Ascending aorta (tissue), 2 donors: ENCODE measurements at regions of chr10 and their contacts with region 1.

Region 1: GRCh38 chr10:22316285-22317120 is at the start of gene COMMD3:
- DNase-seq: peak in 1 of 2 donors; percentile 93
- H3K4me3 ChIP-seq: peak within 1 kb of the TSS; percentile 91 to 94
- H3K27ac ChIP-seq: peak within 1 kb of the TSS; percentile 89 to 90
- H3K4me1 ChIP-seq: peaks cover 4 to 27% of the 10 kb centered on the region in 2 donors
- H3K27me3 ChIP-seq: no peaks in the 10 kb centered on the region
- CTCF ChIP-seq: no peak
- total RNA-seq, gene COMMD3: 21.9 TPM

Region 2: DNA sequence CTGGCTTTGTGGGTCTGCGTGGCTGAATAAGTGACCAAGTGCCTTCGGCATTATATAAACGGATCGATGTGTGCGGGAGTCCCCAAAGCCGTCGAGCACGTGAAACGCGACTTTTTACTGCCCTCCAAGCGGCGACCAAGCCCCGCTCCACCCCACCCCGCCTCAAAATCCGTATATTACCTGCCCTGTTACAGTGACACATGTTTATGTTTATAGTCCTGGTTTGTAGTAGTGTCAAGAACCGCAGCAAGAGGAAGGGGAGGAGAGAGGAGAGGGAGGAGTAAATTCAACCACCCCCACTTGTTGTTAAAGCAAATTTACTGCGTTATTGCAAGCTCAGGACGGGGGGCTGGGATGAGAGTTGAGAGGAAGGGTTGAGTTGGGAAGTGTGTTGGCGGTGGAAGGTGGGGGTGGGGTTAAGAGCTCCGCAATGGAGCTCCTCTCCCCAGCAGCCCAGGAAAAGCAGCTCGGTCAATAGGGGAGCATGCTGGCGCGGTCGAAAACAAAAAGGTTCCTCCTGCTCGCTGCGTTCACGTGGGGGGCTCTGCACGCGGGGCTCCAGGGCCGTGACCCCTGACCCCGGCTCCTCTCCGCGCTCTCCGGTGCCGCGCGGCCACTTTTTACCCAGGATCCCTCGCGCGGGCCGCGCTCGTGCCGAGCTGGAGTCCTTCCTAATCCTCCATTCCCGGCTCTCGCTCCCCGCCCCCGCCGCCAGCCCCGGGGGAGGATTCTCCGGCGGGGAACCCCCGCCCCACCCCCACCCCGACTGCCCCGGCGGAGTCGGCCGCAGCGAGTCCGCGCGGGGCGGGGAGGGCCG is 790.9 kb before region 1 on chr10 and contains the start of gene SKIDA1:
- intact Hi-C with region 1: loop called (anchors 5 kb)
- DNase-seq: peak; percentile 25 to 90
- H3K4me3 ChIP-seq: peak within 1 kb of the TSS; percentile 65 to 90
- H3K27ac ChIP-seq: peak within 1 kb of the TSS; percentile 98 to 100
- H3K4me1 ChIP-seq: peaks cover 0 to 3% of the 10 kb centered on the region in 2 donors
- H3K27me3 ChIP-seq: no peaks in the 10 kb centered on the region
- CTCF ChIP-seq: no peak
- total RNA-seq, gene SKIDA1: not detected

Region 3: DNA sequence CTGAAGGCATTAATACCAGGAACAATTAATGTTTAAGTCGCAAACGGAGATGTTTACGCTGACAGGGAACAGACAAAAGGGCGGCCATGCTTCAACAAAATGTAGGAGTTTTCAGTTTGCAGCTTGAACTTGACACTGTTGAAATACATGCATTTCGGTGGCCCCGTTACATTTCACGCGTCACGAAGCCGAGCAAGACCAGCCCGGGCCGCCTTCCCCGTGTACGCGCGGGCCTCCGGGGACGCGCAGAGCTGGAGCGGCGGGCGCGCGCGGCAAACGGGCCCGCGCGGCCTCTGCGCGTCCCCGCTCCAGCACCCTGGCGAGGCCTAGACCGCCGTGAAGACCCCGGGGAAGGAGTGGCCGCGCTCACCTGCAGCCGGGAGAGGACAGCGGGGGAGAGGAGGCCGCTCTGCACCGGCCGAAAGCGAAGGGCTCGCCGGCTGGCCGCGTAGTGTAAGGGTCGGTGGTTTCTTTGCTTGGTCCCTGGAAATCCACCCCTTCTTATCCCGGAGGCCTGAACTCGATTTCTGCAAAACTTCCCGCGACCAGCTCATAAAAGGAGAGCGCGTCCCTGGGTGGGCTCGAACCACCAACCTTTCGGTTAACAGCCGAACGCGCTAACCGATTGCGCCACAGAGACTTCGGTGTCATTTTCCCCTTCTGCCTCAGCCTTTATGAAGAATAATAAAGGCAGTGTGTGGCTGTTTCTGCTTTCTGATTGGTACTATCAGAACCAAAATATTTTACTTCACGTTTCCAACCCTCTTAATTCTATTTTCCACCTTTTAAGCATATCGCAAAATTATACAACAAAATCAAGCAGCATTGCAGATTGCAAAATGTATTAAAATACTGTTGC is 87.3 kb before region 1 on chr10:
- intact Hi-C with region 1: loop called (anchors 1 kb)
- DNase-seq: peak; percentile 41 to 92
- H3K4me3 ChIP-seq: peak overlapping the region; percentile 63 to 70
- H3K27ac ChIP-seq: peak overlapping the region; percentile 80 to 85
- H3K4me1 ChIP-seq: peaks cover 0 to 3% of the 10 kb centered on the region in 2 donors
- H3K27me3 ChIP-seq: no peaks in the 10 kb centered on the region
- CTCF ChIP-seq: no peak

Region 4: GRCh38 chr10:22340362-22341189 is 24.1 kb after region 1 on chr10:
- intact Hi-C with region 1: loop called (anchors 1 kb)
- DNase-seq: peak in 1 of 2 donors; percentile 84
- H3K4me3 ChIP-seq: peak overlapping the region; percentile 85 to 99
- H3K27ac ChIP-seq: peak overlapping the region; percentile 94 to 99
- H3K4me1 ChIP-seq: peaks cover 3 to 21% of the 10 kb centered on the region in 2 donors
- H3K27me3 ChIP-seq: peaks cover 62% of the 10 kb centered on the region
- CTCF ChIP-seq: no peak

Region 5: DNA sequence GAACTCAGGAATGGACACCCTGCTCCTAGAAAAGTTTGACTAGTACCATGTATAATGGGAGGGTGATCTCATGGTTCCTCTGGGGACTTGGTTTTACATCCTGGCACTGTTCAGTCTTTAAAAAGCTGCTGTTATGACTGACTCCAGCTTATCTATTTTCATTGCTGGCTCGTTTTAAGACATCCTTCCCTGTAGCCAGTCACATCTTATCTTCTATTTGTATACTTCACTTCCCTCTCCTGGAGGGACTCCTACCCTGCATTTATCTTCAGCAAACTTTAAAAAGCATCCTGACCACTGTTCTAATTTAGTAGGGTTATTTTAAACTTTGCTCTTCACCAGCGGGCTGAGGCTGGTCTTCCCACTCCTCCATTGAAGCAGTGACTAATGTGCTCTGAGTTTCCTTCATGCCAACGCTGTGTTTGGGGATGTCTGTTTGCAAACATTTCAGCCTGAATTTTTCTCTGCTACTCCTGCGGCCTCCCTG is 538.5 kb after region 1 on chr10:
- intact Hi-C with region 1: loop called (anchors 10 kb)
- DNase-seq: no peak
- H3K4me3 ChIP-seq: no peak overlapping the region
- H3K27ac ChIP-seq: peak overlapping the region; percentile 27 to 39
- H3K4me1 ChIP-seq: peaks cover 7 to 21% of the 10 kb centered on the region in 2 donors
- H3K27me3 ChIP-seq: no peaks in the 10 kb centered on the region
- CTCF ChIP-seq: peak in 2 of 3 experiments; percentile 13 to 35

Region 6: GRCh38 chr10:23067939-23068775 is 751.7 kb after region 1 on chr10:
- intact Hi-C with region 1: loop called (anchors 5 kb)
- DNase-seq: peak in 1 of 2 donors; percentile 93
- H3K4me3 ChIP-seq: no peak overlapping the region
- H3K27ac ChIP-seq: peak overlapping the region; percentile 28 to 33
- H3K4me1 ChIP-seq: peaks cover 5 to 12% of the 10 kb centered on the region in 2 donors
- H3K27me3 ChIP-seq: no peaks in the 10 kb centered on the region
- CTCF ChIP-seq: peak; percentile 44 to 87 (median 86)